HAP-1 (cell line): ENCODE measurements at regions of chr10 and their contacts with region 1.

Region 1: GRCh38 chr10:93482145-93482834 is at the start of gene MYOF:
- DNase-seq: peak; percentile 70 to 72
- H3K4me3 ChIP-seq: peak within 1 kb of the TSS; percentile 38
- H3K4me1 ChIP-seq: peaks cover 18% of the 10 kb centered on the region
- H3K27me3 ChIP-seq: no peaks in the 10 kb centered on the region

Region 2: DNA sequence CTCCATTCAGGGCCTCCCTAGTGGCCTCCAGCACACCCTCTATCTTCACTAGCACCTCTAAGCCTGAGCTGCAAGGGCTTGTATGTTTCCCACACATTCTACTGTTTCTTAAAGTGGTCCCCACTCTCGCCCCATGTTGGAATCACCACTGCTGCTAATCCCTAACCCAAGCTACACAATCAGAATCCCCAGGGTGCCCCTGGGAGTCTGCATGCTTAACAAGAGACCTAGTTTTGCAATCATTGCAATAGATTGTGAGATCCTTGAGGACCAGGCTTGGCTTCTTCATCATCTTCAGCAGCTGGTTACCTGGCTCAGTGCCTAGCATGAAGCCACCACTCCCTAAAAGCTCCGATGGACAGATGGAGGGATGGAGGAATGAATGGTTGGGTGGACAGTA is 114.1 kb before region 1 on chr10:
- in situ Hi-C with region 1: loop called (anchors 5 kb)
- DNase-seq: no peak
- H3K4me3 ChIP-seq: no peak overlapping the region
- H3K4me1 ChIP-seq: no peaks in the 10 kb centered on the region
- H3K27me3 ChIP-seq: no peaks in the 10 kb centered on the region